ENCODE measurements at regions of chr2 and their contacts with region 1.

Region 1: DNA sequence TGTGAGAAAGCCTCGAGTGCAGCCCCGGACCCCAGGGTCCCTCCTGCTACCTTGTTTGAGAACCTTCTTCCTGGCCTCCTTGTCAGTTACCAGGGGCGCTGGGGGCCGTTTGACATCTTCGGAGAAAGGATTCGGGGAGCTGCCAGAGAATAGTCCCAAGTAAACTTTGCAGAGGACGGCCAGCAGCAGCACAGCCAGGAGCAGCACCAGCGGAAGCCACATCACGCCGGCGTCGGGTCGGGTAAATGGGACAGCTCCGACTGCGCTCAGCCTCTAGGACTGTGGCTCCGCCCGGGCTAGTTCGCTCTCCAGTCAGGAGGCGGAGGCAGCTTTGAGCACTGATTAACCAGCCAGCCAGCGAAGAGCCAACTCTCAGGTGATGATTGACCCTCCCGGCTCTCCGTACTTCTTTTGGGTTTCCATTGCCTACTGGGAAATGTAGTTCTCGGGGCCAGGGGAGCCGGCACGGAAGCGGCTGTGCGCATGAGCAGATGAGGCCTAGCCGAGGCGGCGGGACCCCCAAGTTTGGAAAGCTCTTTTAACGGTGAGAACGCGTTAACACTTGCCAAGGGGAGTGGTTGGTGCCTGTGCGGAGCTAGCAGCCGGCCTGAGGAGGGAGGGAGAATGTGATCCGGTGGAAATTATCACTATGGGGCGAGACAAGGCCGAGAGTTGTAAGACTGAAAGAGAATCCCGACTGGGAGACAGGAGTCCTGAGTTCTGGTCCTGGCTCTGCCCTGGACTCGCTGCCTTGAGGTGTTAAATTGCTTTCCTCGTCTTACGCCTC is at the starts of genes ELMOD3 and RETSAT:
- DNase-seq: peak; percentile 98
- ATAC-seq: peak; percentile 99
- H3K4me3 ChIP-seq: peak within 1 kb of the TSS; percentile 60 to 100 (median 85)
- H3K4me3 Mint-ChIP-seq: peak within 1 kb of the TSS; percentile 95
- H3K27ac ChIP-seq: peak within 1 kb of the TSS; percentile 81 to 95
- H3K27ac Mint-ChIP-seq: peak within 1 kb of the TSS; percentile 95
- H3K4me1 ChIP-seq: peaks cover 19 to 26% of the 10 kb centered on the region in 2 donors
- H3K4me1 Mint-ChIP-seq: peaks cover 40% of the 10 kb centered on the region
- H3K27me3 ChIP-seq: no peaks in the 10 kb centered on the region
- H3K27me3 Mint-ChIP-seq: no peaks in the 10 kb centered on the region
- CTCF ChIP-seq: no peak
- total RNA-seq, gene ELMOD3: 34.0 and 34.3 TPM in 2 replicates
- total RNA-seq, gene RETSAT: 23.8 and 28.1 TPM in 2 replicates

Region 2: DNA sequence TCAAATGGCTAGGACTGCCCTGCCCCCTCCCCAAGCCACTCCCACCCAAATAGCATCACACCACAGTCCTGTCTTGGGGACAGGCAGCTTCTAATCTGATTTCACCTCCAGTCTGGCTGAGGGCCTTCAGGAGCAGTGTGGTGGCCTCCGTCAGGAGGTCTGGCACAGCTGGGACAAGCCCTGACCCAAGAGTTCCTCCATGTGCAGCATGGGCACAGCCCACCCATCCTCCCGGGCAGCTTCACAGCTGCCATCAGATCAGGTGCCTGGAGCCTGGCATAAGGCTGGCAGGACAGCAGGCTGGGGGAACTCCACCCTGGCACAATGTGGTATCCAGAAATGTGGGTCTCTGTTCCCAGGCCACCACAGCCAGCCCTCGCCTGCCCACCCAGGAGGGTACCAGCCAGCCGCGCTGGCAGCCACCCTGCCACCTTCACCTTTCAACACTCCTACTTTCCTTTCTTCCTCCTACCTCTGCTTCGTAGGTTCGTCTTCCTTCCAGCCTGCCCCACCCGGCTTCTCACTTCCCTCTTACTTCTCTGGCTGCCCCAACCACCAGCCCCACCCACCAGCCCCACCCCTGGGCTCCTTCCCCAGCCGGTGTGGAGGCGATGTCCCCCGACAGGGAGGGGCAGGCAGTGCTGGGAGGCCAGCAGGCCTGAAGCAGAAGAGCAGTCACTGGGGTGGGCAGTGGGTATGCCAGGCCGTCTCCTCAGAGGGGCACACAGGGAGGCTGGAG is 55.5 kb after region 1 on chr2 and contains the start of gene CAPG:
- CTCF ChIA-PET with region 1: no interaction called
- POLR2A ChIA-PET with region 1: interaction called, 6 read pairs
- intact Hi-C with region 1: loop called (anchors 1 kb)
- DNase-seq: peak; percentile 82
- ATAC-seq: peak; percentile 78
- H3K4me3 ChIP-seq: peak within 1 kb of the TSS; percentile 43 to 75 (median 57)
- H3K4me3 Mint-ChIP-seq: peak within 1 kb of the TSS; percentile 90
- H3K27ac ChIP-seq: peak within 1 kb of the TSS; percentile 71 to 84
- H3K27ac Mint-ChIP-seq: peak within 1 kb of the TSS; percentile 91
- H3K4me1 ChIP-seq: peaks cover 73 to 84% of the 10 kb centered on the region in 2 donors
- H3K4me1 Mint-ChIP-seq: peaks cover 76% of the 10 kb centered on the region
- H3K27me3 ChIP-seq: no peaks in the 10 kb centered on the region
- H3K27me3 Mint-ChIP-seq: no peaks in the 10 kb centered on the region
- CTCF ChIP-seq: no peak
- total RNA-seq, gene CAPG: 179 and 210 TPM in 2 replicates

Region 3: GRCh38 chr2:85619617-85620016 is 265.1 kb after region 1 on chr2:
- CTCF ChIA-PET with region 1: no interaction called
- POLR2A ChIA-PET with region 1: no interaction called
- intact Hi-C with region 1: loop called (anchors 5 kb)
- DNase-seq: no peak
- ATAC-seq: no peak
- H3K4me3 ChIP-seq: no peak overlapping the region
- H3K4me3 Mint-ChIP-seq: no peak overlapping the region
- H3K27ac ChIP-seq: no peak overlapping the region
- H3K27ac Mint-ChIP-seq: no peak overlapping the region
- H3K4me1 ChIP-seq: peaks cover 15 to 23% of the 10 kb centered on the region in 2 donors
- H3K4me1 Mint-ChIP-seq: peaks cover 21% of the 10 kb centered on the region
- H3K27me3 ChIP-seq: no peaks in the 10 kb centered on the region
- H3K27me3 Mint-ChIP-seq: no peaks in the 10 kb centered on the region
- CTCF ChIP-seq: no peak